Heart right ventricle (tissue), 16 donors: ENCODE measurements at regions of chr11 and their contacts with region 1.

Region 1: DNA sequence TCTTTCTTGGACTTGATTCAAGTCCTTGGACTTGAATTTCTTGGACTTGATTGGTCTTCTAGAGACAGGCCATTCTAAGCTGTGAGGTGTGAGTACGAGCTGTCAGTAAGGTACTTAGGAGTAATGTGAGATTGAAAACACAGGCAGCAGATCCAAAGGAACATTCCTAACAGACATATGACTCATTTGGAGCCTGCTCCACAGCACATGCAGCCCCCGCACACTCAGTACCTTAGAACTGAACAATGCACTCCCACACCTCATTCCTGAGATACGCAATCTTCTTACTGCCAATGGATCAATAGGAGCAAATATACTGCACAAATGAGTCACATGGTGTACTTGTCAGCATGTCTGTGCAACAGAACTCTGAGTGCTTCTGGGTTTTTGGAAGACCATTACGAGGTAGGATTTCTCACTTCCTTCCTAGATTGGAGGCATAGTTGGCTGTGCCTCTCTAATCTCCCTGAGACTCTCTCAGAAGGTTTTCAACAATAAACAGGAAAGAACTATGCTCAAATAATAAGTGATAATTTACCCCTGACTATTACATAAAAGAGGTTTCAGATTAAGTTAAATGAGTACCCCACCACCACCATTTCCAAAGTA is 243.1 kb downstream of the KCNA4 start:
- DNase-seq: peak in 1 of 2 donors; percentile 48
- ATAC-seq: peak; percentile 93 to 100 (median 98)
- H3K4me3 ChIP-seq: no peak overlapping the region
- H3K27ac ChIP-seq: peak overlapping the region in 9 of 10 donors; percentile 40 to 68 (median 58)
- H3K4me1 ChIP-seq: peaks cover 0 to 28% (median 0%) of the 10 kb centered on the region in 9 donors
- H3K27me3 ChIP-seq: no peaks in the 10 kb centered on the region
- CTCF ChIP-seq: no peak

Region 2: DNA sequence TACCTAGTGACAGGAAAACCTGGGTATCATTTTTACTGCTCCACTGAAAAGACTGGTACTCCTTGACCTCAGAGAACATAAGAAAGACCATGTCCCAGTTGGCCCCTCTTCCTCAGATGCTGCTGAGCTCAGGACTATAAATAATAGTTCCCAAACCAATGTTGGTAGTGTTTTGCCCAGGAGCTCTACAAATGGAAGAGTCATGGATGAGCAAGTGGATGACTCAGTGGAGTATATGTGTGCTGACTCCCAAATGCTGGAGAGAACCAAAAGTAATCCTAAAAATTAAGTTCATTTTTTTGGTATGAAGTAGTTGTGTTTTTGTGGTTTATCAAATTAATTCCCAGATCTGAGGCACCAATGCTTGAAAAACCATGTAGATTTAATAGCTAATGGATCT is 238.9 kb before region 1 on chr11:
- intact Hi-C with region 1: loop called in 2 of 10 experiments (anchors 10 kb)
- DNase-seq: no peak
- ATAC-seq: no peak
- H3K4me3 ChIP-seq: no peak overlapping the region
- H3K27ac ChIP-seq: no peak overlapping the region
- H3K4me1 ChIP-seq: peaks cover 0 to 13% (median 6%) of the 10 kb centered on the region in 9 donors
- H3K27me3 ChIP-seq: no peaks in the 10 kb centered on the region
- CTCF ChIP-seq: no peak

Region 3: GRCh38 chr11:29826878-29827277 is 53.1 kb after region 1 on chr11:
- intact Hi-C with region 1: no loop called
- DNase-seq: no peak
- ATAC-seq: no peak
- H3K4me3 ChIP-seq: no peak overlapping the region
- H3K27ac ChIP-seq: no peak overlapping the region
- H3K4me1 ChIP-seq: no peaks in the 10 kb centered on the region
- H3K27me3 ChIP-seq: no peaks in the 10 kb centered on the region
- CTCF ChIP-seq: no peak

Region 4: DNA sequence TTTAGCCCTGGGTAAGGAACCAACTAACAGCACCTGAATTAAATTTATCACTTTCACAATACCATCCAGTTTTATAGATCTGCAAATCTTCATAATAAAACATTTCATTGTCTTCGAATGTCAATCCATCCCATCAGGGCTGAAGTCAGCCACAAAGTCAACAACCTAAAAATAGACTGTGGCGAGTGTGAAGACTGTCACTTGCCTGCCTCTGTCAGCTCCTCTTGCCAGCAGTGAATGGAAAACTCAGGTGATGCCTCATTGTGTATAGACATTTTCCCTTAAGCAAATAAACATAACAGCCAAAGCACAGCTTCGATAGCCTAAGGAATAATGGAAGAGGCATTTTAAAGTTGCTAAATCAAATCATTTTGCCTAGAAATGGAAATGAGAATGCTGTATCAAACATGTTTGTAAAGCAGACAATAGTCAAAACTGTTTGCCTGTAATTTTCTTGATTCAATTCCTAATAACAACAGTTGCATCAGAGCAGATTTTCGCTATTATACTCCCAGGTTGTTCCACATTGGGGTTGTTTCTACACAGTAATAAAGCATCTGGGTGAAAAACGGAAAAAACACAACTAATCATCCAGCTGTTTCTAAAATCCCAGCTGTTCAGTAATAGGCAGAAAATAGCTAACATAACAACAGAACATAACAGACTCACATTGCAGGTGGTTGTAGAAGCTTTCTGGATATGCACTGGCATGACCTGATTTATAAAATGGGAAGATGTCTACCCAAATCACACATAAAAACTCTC is 227.4 kb after region 1 on chr11:
- intact Hi-C with region 1: loop called in 1 of 10 experiments (anchors 10 kb)
- DNase-seq: peak in 1 of 2 donors; percentile 31
- ATAC-seq: peak; percentile 52 to 95 (median 86)
- H3K4me3 ChIP-seq: no peak overlapping the region
- H3K27ac ChIP-seq: peak overlapping the region in 5 of 10 donors; percentile 11 to 54 (median 39)
- H3K4me1 ChIP-seq: peaks cover 0 to 38% (median 6%) of the 10 kb centered on the region in 9 donors
- H3K27me3 ChIP-seq: no peaks in the 10 kb centered on the region
- CTCF ChIP-seq: no peak